Activated B cell treated with CpG ODN at 0.5 μM for 24 hours (primary cell): ENCODE measurements at regions of chr18 and their contacts with region 1.

Region 1: DNA sequence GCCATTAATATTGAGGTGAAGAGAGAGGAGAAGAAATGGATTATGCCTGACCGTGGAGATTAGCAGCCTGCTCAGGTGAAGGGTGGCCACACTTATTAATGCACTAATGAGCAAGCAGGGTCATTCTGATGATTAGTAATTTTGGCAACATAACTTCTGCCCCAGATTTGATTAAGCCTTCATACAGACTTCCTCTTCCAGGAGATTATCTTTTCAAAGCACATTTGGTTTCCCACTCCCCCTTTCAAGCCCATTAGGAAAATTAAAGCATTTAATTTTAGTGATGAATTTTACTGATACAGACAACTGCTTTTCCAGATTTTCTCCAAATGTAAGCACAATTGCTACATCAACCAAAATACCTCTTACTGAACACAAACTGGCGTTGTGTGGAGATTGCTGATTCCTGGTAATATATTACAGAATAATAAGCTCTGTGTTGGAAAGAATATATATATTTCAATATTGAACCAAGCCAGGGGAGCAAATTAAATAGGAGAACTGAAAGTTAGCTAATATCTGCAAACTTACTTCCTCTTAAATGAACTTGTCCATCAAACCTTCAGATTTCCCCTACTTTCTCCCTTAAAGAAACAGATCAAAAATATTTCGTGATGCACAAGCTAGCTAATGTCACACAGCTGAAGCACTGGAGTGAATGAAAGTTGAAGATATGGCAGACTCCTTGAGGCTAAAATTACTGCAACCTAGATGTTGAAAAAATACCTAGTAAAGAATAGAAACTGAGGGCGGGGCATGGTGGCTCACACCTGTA is 140.8 kb downstream of the FAM210A start:
- DNase-seq: no peak
- ATAC-seq: peak; percentile 80
- H3K4me3 Mint-ChIP-seq: peak overlapping the region; percentile 76
- H3K27ac Mint-ChIP-seq: peak overlapping the region; percentile 98
- H3K4me1 Mint-ChIP-seq: peaks cover 63% of the 10 kb centered on the region
- H3K27me3 Mint-ChIP-seq: no peaks in the 10 kb centered on the region
- CTCF ChIP-seq: no peak

Region 2: GRCh38 chr18:13597068-13597467 is 11.5 kb after region 1 on chr18:
- CTCF ChIA-PET with region 1: interaction called, 3 read pairs
- POLR2A ChIA-PET with region 1: interaction called, 41 read pairs
- intact Hi-C with region 1: loop called (anchors 1 kb)
- DNase-seq: no peak
- ATAC-seq: no peak
- H3K4me3 Mint-ChIP-seq: no peak overlapping the region
- H3K27ac Mint-ChIP-seq: no peak overlapping the region
- H3K4me1 Mint-ChIP-seq: peaks cover 17% of the 10 kb centered on the region
- H3K27me3 Mint-ChIP-seq: no peaks in the 10 kb centered on the region
- CTCF ChIP-seq: no peak